ENCODE measurements at regions of chr2 and their contacts with region 1.

Region 1: GRCh38 chr2:207625018-207625907 is at the start of gene METTL21A:
- DNase-seq: peak; percentile 88 to 99 (median 95)
- ATAC-seq: peak; percentile 82
- H3K4me3 ChIP-seq: peak within 1 kb of the TSS; percentile 91 to 97
- H3K4me3 Mint-ChIP-seq: peak within 1 kb of the TSS; percentile 96
- H3K27ac ChIP-seq: peak within 1 kb of the TSS; percentile 95 to 97
- H3K27ac Mint-ChIP-seq: peak within 1 kb of the TSS; percentile 96
- H3K4me1 ChIP-seq: peaks cover 18% of the 10 kb centered on the region
- H3K4me1 Mint-ChIP-seq: peaks cover 43% of the 10 kb centered on the region
- H3K27me3 ChIP-seq: no peaks in the 10 kb centered on the region
- H3K27me3 Mint-ChIP-seq: no peaks in the 10 kb centered on the region
- CTCF ChIP-seq: peak; percentile 49
- total RNA-seq, gene METTL21A: 12.3 to 12.4 TPM

Region 2: DNA sequence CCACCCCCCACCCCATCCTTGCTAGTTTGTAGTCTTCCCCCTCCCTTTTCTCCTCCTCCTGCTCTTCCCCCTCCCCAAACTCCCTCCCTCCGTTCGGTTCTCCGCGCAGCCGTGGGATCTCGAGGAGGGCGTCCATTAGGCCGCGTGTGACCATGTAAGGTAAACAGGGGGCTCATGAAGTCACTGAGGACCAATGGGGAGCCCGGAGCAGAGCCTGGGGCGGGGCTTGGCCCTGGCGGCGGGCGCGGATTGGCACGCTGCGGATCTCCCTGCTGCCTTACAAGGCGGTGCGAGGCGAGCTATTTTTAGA is 459.3 kb before region 1 on chr2:
- CTCF ChIA-PET with region 1: no interaction called
- POLR2A ChIA-PET with region 1: interaction called, 8 read pairs
- intact Hi-C with region 1: loop called (anchors 5 kb)
- DNase-seq: peak; percentile 88 to 97 (median 95)
- ATAC-seq: peak; percentile 90
- H3K4me3 ChIP-seq: peak overlapping the region; percentile 72 to 90
- H3K4me3 Mint-ChIP-seq: peak overlapping the region; percentile 96
- H3K27ac ChIP-seq: peak overlapping the region; percentile 93 to 98
- H3K27ac Mint-ChIP-seq: peak overlapping the region; percentile 97
- H3K4me1 ChIP-seq: peaks cover 15% of the 10 kb centered on the region
- H3K4me1 Mint-ChIP-seq: peaks cover 46% of the 10 kb centered on the region
- H3K27me3 ChIP-seq: peaks cover 0 to 4% of the 10 kb centered on the region in 2 experiments
- H3K27me3 Mint-ChIP-seq: no peaks in the 10 kb centered on the region
- CTCF ChIP-seq: no peak

Region 3: DNA sequence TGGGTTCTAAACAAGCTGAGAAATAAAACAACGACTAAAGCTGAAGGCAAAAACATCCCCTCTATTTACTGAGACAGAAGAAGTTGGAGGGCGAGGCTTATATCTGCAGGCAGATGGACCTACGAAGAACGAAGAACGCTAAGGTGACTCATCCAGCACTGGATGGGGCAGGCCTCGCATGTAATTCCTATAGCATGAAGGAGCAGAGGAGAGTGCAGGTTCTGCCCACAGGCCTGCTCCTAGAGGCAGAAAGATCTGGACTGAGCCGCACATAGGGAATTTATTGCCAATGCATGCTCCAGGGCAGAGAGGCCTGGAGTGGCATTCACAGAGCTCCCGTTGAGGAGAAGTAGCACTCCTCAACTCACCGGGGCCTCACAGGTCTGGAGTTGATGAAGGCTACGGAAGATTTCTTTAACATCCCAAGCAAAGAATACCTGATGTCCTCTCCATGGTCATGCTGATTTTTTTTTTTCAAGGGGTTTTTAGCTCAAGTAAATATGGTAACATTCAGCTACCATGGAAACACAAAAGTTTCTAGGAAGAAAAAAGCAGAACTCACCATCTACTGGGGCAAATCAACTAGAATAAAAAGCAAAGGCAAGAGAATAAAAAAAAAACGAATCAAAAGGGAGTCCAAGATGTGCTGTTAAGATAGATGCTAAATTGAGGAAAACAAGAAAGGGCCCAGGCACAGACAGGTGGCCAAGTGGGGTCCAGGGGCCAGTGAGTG is 10.4 kb after region 1 on chr2:
- CTCF ChIA-PET with region 1: interaction called, 14 read pairs
- POLR2A ChIA-PET with region 1: interaction called, 6 read pairs
- intact Hi-C with region 1: no loop called
- DNase-seq: no peak
- ATAC-seq: no peak
- H3K4me3 ChIP-seq: no peak overlapping the region
- H3K4me3 Mint-ChIP-seq: no peak overlapping the region
- H3K27ac ChIP-seq: no peak overlapping the region
- H3K27ac Mint-ChIP-seq: no peak overlapping the region
- H3K4me1 ChIP-seq: no peaks in the 10 kb centered on the region
- H3K4me1 Mint-ChIP-seq: no peaks in the 10 kb centered on the region
- H3K27me3 ChIP-seq: peaks cover 0 to 2% of the 10 kb centered on the region in 2 experiments
- H3K27me3 Mint-ChIP-seq: no peaks in the 10 kb centered on the region
- CTCF ChIP-seq: no peak

Region 4: DNA sequence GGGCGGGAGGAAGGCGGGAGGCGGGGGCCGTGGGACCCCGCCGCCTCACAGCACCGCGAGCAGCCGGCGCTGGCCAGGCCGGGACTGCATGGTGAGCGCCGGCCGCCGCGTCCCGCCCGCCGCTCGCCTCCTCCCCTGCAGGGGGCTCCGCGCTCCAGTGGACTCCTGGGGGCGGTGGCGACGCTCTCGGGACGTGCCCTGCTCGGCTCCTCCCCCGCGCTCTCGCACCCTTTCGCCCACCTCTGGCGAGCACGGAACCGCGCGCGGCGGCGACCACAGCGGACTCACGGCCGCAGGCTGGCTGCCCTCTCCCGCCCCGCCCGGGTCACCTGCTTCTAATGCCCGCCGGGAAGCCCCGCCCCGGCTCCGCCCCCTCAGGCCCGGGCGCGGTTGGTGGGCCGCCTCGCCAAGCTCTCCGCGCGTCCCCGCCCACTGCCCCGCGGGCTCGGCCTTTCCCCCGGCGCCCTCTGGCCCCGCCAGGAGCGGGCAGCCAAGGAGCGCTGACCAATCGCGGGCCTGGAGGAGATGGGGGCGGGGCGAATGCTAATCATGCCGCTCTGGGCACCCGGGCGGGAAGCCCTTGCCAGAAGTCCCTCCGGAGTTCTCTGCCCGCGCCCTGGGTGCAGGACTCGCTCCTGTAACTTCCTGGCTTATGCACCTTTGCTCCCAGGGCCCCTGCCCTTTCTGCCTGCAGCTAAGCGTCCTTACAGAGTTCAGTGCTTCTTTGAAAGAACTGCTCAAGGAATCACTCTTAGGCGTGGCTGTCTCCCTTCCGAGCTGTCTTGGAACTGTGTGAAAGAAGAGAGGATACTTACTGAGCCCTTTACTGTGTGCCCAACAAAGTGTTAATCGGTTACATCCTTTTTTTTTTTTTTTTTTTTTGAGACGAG is 144.6 kb after region 1 on chr2 and contains the start of gene FZD5:
- CTCF ChIA-PET with region 1: no interaction called
- POLR2A ChIA-PET with region 1: no interaction called
- intact Hi-C with region 1: loop called (anchors 1 to 2 kb)
- DNase-seq: peak; percentile 44 to 90 (median 74)
- ATAC-seq: peak; percentile 71
- H3K4me3 ChIP-seq: peak within 1 kb of the TSS; percentile 67 to 79
- H3K4me3 Mint-ChIP-seq: peak within 1 kb of the TSS; percentile 95
- H3K27ac ChIP-seq: no peak within 1 kb of the TSS
- H3K27ac Mint-ChIP-seq: no peak within 1 kb of the TSS
- H3K4me1 ChIP-seq: peaks cover 36% of the 10 kb centered on the region
- H3K4me1 Mint-ChIP-seq: peaks cover 33% of the 10 kb centered on the region
- H3K27me3 ChIP-seq: peaks cover 4 to 5% of the 10 kb centered on the region in 2 experiments
- H3K27me3 Mint-ChIP-seq: peaks cover 22% of the 10 kb centered on the region
- CTCF ChIP-seq: no peak
- total RNA-seq, gene FZD5: 0.39 to 0.54 TPM

Region 5: GRCh38 chr2:208040199-208041171 is 415.2 kb after region 1 on chr2:
- CTCF ChIA-PET with region 1: interaction called, 7 read pairs
- POLR2A ChIA-PET with region 1: no interaction called
- intact Hi-C with region 1: loop called (anchors 1 to 2 kb)
- DNase-seq: peak; percentile 29 to 69 (median 65)
- ATAC-seq: peak; percentile 70
- H3K4me3 ChIP-seq: no peak overlapping the region
- H3K4me3 Mint-ChIP-seq: no peak overlapping the region
- H3K27ac ChIP-seq: no peak overlapping the region
- H3K27ac Mint-ChIP-seq: no peak overlapping the region
- H3K4me1 ChIP-seq: no peaks in the 10 kb centered on the region
- H3K4me1 Mint-ChIP-seq: no peaks in the 10 kb centered on the region
- H3K27me3 ChIP-seq: no peaks in the 10 kb centered on the region
- H3K27me3 Mint-ChIP-seq: no peaks in the 10 kb centered on the region
- CTCF ChIP-seq: peak; percentile 56

Measured in CD8-positive, alpha-beta T cell (primary cell).